H1 (cell line): ENCODE measurements at regions of chr1 and their contacts with region 1.

Region 1: GRCh38 chr1:62436466-62437256 is at the start of gene USP1:
- DNase-seq: peak; percentile 91 to 97
- H3K4me3 ChIP-seq: peak within 1 kb of the TSS; percentile 74 to 88 (median 80)
- H3K27ac ChIP-seq: peak within 1 kb of the TSS; percentile 99
- H3K4me1 ChIP-seq: no peaks in the 10 kb centered on the region; a peak in 3 of 7 replicates
- H3K27me3 ChIP-seq: no peaks in the 10 kb centered on the region
- CTCF ChIP-seq: no peak
- EP300 ChIP-seq: peak in 1 of 2 experiments; percentile 34; a peak in 1 of 3 replicates
- POLR2A ChIP-seq: peak; percentile 74 to 86
- RAD21 ChIP-seq: no peak
- total RNA-seq, gene USP1: 48.3 and 49.6 TPM in 2 replicates

Region 2: DNA sequence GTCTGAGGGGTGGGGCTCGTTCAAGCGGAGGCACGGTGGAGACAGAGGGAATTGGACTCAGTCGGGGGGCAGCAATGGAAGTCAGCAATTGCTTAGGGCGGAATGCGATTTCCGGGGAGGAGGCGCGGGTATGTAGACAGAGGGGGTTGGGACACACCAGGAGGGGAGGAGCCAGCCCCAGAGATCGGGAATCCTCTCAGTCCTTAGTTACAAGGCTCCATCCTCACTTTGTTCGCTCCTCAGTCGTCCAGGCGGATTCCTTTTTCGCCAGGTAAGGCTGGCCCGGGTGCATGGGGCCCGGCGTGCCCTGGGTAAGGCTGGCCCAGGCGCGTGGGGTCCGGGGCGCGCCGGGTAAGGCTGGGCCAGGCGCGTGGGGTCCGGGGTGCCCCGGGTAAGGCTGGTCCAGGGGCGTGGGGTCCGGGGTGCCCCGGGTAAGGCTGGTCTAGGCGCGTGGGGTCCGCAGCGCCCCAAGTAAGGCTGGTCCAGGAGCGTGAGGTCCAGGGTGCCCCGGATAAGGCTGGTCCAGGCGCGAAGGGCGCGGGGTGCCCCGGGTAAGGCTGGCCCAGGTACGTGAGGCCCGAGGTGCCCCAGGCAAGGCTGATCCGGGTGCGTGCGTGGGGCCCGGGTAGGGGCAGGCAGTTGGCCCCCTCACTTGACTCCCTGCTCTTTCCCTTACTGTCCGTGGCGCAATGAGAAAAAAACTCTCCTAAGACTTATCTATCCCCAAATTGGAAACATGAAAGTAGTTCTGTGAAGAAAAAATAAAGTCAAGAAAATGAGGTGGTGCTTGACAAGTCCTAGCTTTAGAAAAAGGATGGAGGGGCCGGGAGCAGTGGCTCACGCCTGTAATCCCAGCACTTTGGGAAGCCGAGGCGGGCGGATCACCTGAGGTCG is 241.8 kb before region 1 on chr1 and contains the start of gene L1TD1:
- CTCF ChIA-PET with region 1: no interaction called
- POLR2A ChIA-PET with region 1: interaction called, 17 read pairs
- DNase-seq: peak; percentile 88 to 91
- H3K4me3 ChIP-seq: peak within 1 kb of the TSS; percentile 77 to 100 (median 93)
- H3K27ac ChIP-seq: peak within 1 kb of the TSS; percentile 95
- H3K4me1 ChIP-seq: peaks cover 4 to 19% (median 6%) of the 10 kb centered on the region in 4 experiments
- H3K27me3 ChIP-seq: no peaks in the 10 kb centered on the region
- CTCF ChIP-seq: no peak
- EP300 ChIP-seq: no peak; a peak in 1 of 3 replicates
- POLR2A ChIP-seq: peak; percentile 77 to 96
- RAD21 ChIP-seq: no peak
- total RNA-seq, gene L1TD1: 425 and 441 TPM in 2 replicates

Region 3: GRCh38 chr1:62209931-62210595 is 226.6 kb before region 1 on chr1:
- CTCF ChIA-PET with region 1: no interaction called
- POLR2A ChIA-PET with region 1: interaction called, 11 read pairs
- DNase-seq: no peak
- H3K4me3 ChIP-seq: no peak overlapping the region
- H3K27ac ChIP-seq: no peak overlapping the region
- H3K4me1 ChIP-seq: no peaks in the 10 kb centered on the region; a peak in 1 of 7 replicates
- H3K27me3 ChIP-seq: no peaks in the 10 kb centered on the region
- CTCF ChIP-seq: no peak
- EP300 ChIP-seq: no peak
- POLR2A ChIP-seq: peak; percentile 21 to 38
- RAD21 ChIP-seq: no peak

Region 4: GRCh38 chr1:62407405-62408009 is 29.2 kb before region 1 on chr1:
- CTCF ChIA-PET with region 1: interaction called, 10 read pairs
- POLR2A ChIA-PET with region 1: interaction called, 3 read pairs
- DNase-seq: no peak
- H3K4me3 ChIP-seq: no peak overlapping the region
- H3K27ac ChIP-seq: no peak overlapping the region
- H3K4me1 ChIP-seq: peaks cover 0 to 5% (median 2%) of the 10 kb centered on the region in 4 experiments; a peak in 4 of 7 replicates
- H3K27me3 ChIP-seq: peaks cover 0 to 3% (median 0%) of the 10 kb centered on the region in 4 experiments; a peak in 1 of 7 replicates
- CTCF ChIP-seq: peak in 2 of 3 experiments; percentile 63 to 74; a peak in 3 of 4 replicates
- EP300 ChIP-seq: no peak
- POLR2A ChIP-seq: no peak
- RAD21 ChIP-seq: peak; percentile 91 to 93

Region 5: GRCh38 chr1:62424411-62424810 is 12.2 kb before region 1 on chr1:
- CTCF ChIA-PET with region 1: interaction called, 5 read pairs
- POLR2A ChIA-PET with region 1: interaction called, 16 read pairs
- DNase-seq: no peak
- H3K4me3 ChIP-seq: no peak overlapping the region
- H3K27ac ChIP-seq: no peak overlapping the region
- H3K4me1 ChIP-seq: peaks cover 0 to 3% (median 1%) of the 10 kb centered on the region in 4 experiments; a peak in 2 of 7 replicates
- H3K27me3 ChIP-seq: no peaks in the 10 kb centered on the region
- CTCF ChIP-seq: no peak
- EP300 ChIP-seq: no peak
- POLR2A ChIP-seq: no peak
- RAD21 ChIP-seq: no peak